ENCODE measurements at regions of chr12 and their contacts with region 1.

Region 1: DNA sequence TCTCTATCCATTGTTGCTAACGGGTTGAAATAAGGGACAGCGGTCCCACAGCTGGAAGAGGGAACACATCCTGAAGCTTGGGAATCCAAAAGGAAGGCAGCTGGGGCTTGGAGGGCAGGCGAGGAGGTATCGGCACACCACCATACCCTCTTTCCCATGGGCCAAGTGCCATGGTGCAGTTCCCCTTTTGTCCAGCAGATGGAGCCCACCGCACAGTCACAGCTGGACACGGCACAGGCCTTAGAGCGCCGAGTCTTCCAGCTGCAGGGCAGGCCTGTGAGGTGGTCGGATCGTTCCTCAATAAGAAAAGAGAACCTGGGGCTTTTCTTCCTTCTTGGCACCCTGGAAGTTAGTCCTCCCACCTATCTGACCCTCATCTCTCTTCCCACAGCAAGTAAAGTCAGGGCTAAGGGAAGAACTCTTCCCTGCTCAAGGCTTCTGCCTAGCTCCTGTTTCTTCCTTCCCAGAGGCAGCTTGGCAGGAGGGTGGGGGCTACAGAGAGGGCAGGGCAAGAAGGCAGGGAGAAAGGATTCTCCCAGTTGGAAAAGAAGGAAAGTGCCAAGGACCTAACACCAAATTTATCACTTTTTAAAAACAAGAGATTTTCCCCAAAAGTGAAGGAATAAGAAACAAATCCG is 8.6 kb downstream of the PPP1R1A start:
- DNase-seq: peak; percentile 86
- ATAC-seq: peak; percentile 93
- H3K4me3 Mint-ChIP-seq: no peak overlapping the region
- H3K27ac Mint-ChIP-seq: no peak overlapping the region
- H3K4me1 Mint-ChIP-seq: no peaks in the 10 kb centered on the region
- H3K27me3 Mint-ChIP-seq: peaks cover 13% of the 10 kb centered on the region

Region 2: GRCh38 chr12:54455760-54456469 is 123.9 kb before region 1 on chr12:
- CTCF ChIA-PET with region 1: no interaction called
- POLR2A ChIA-PET with region 1: no interaction called
- DNase-seq: no peak
- ATAC-seq: no peak
- H3K4me3 Mint-ChIP-seq: no peak overlapping the region
- H3K27ac Mint-ChIP-seq: no peak overlapping the region
- H3K4me1 Mint-ChIP-seq: no peaks in the 10 kb centered on the region
- H3K27me3 Mint-ChIP-seq: peaks cover 30% of the 10 kb centered on the region

Region 3: GRCh38 chr12:54502485-54502884 is 77.3 kb before region 1 on chr12:
- CTCF ChIA-PET with region 1: no interaction called
- POLR2A ChIA-PET with region 1: no interaction called
- DNase-seq: no peak
- ATAC-seq: no peak
- H3K4me3 Mint-ChIP-seq: peak overlapping the region; percentile 42
- H3K27ac Mint-ChIP-seq: peak overlapping the region; percentile 60
- H3K4me1 Mint-ChIP-seq: peaks cover 48% of the 10 kb centered on the region
- H3K27me3 Mint-ChIP-seq: no peaks in the 10 kb centered on the region

Region 4: DNA sequence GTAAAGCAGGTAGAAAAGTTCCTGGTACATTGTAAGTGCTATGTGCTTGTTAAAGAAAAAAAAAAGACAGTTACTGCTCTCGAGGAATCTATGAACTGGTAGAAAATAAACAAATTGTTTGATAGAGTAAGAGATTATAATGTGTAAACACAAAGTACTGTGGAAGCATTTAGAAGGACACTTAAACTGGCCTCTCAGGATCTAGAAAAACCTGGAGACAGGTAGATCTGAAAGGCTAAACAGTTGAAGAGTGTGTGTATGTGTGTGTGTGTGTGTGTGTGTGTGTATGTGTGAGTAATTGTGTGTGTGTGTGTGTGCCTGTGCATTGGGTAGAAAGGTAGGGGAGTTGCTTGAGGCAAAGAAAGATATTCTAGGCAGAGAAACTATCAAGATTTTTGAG is 67.3 kb before region 1 on chr12:
- CTCF ChIA-PET with region 1: no interaction called
- POLR2A ChIA-PET with region 1: no interaction called
- DNase-seq: no peak
- ATAC-seq: no peak
- H3K4me3 Mint-ChIP-seq: no peak overlapping the region
- H3K27ac Mint-ChIP-seq: no peak overlapping the region
- H3K4me1 Mint-ChIP-seq: no peaks in the 10 kb centered on the region
- H3K27me3 Mint-ChIP-seq: no peaks in the 10 kb centered on the region

Region 5: GRCh38 chr12:54535474-54535873 is 44.3 kb before region 1 on chr12:
- CTCF ChIA-PET with region 1: no interaction called
- POLR2A ChIA-PET with region 1: no interaction called
- DNase-seq: no peak
- ATAC-seq: no peak
- H3K4me3 Mint-ChIP-seq: no peak overlapping the region
- H3K27ac Mint-ChIP-seq: no peak overlapping the region
- H3K4me1 Mint-ChIP-seq: no peaks in the 10 kb centered on the region
- H3K27me3 Mint-ChIP-seq: no peaks in the 10 kb centered on the region

Region 6: GRCh38 chr12:54560374-54560858 is 19.4 kb before region 1 on chr12:
- CTCF ChIA-PET with region 1: interaction called, 46 read pairs
- POLR2A ChIA-PET with region 1: interaction called, 3 read pairs
- DNase-seq: peak; percentile 90
- ATAC-seq: peak; percentile 100
- H3K4me3 Mint-ChIP-seq: peak overlapping the region; percentile 67
- H3K27ac Mint-ChIP-seq: peak overlapping the region; percentile 78
- H3K4me1 Mint-ChIP-seq: peaks cover 27% of the 10 kb centered on the region
- H3K27me3 Mint-ChIP-seq: no peaks in the 10 kb centered on the region

Region 7: DNA sequence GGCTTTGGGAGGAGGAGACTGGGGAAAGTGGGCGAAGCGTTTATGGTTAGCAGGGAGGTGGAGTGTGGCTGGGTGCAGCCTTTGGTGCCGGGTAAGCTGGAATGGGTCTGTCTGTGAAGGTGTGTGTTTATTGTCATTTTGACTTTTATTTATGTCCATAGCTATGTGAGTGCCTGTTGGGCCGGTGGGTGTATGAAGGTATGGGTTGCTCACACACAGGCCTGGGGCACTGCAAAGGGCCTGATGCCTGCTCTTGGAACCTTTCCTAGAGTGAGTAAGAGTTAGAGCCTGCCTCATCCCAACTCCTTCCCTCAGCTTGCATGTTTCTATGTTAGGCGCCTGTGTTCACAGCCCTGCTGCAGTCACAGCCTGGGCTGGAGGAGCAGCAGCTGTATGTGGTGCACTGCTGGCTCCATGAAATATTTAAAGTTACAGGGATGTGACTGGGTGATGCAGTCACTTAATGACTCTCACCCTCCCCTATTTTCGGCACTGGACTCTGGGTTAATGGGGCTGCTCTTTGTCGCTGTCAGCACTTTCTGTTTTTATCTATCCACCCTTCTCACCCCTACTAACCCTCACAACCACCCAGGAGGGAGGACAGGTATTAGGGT is 11.3 kb after region 1 on chr12:
- CTCF ChIA-PET with region 1: interaction called, 14 read pairs
- POLR2A ChIA-PET with region 1: interaction called, 3 read pairs
- DNase-seq: no peak
- ATAC-seq: no peak
- H3K4me3 Mint-ChIP-seq: no peak overlapping the region
- H3K27ac Mint-ChIP-seq: no peak overlapping the region
- H3K4me1 Mint-ChIP-seq: peaks cover 2% of the 10 kb centered on the region
- H3K27me3 Mint-ChIP-seq: peaks cover 50% of the 10 kb centered on the region

Region 8: DNA sequence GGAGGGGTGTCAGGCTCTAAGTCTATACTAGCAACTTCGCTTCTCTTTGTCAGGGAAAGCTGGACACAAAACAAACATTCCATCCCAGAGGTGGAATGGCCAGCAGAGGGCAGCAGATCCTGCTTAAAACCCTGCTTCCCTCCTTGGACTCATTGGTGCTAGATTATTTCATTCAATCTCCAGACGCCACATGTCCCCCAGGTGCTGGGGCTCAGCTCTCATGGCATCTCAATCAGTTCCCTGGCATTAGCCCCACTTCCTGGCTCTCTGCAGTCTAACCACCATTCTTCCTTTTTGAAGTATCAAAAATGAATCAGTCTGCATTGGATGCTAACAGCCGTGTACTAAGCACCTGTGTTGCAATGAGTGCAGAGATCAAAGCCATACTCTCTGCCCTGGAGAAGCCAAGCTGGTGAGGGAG is 16.7 kb after region 1 on chr12:
- CTCF ChIA-PET with region 1: interaction called, 14 read pairs
- POLR2A ChIA-PET with region 1: interaction called, 3 read pairs
- DNase-seq: peak; percentile 60
- ATAC-seq: peak; percentile 72
- H3K4me3 Mint-ChIP-seq: no peak overlapping the region
- H3K27ac Mint-ChIP-seq: no peak overlapping the region
- H3K4me1 Mint-ChIP-seq: no peaks in the 10 kb centered on the region
- H3K27me3 Mint-ChIP-seq: peaks cover 10% of the 10 kb centered on the region

Region 9: DNA sequence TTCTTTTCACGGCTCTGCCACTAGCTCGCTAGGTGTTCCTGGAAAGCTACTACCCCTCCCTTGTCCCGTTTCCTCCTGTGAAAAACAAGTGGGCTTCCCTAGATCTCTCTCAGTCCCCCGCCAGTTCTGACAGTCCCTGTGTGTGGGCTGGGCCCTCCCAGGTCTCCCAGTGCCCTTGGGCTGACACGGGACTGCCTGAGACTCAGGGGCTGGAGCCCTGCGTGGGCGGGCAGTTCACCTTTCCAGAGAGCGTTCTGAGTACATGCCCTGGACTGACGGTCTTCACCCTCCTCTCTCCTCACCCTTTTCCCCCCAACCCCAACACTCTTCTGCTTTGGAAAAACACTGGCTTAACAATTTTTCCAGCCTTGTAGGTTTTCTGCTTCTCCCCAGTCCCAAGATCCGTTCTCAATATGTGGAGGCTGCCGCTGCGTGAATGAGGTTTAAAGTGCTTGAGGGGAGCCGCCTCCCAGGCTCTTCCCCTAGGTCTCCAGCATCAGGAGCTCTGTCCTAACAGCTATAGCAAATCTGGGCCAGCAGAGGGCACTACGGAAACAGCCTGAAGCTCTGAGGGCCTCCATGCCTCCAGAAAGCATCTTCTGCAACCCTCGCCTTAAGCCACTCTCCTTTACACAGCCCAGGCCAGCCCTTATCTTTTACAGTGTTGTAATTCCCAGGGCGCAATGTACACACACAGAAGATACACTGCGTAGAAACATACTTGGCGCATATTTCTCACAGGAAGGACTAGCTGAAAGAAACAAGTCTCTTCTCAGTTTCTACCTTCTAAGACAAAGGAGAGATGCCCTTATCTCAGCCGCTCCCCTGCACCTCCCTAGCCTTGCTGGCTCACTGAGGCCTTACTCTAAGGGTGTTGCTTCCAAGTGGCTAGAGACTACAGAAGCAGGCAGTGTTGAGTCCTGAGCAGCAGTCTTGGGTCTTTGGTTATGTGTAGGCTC is 78.8 kb after region 1 on chr12:
- CTCF ChIA-PET with region 1: interaction called, 10 read pairs
- POLR2A ChIA-PET with region 1: no interaction called
- DNase-seq: peak; percentile 63
- ATAC-seq: peak; percentile 81
- H3K4me3 Mint-ChIP-seq: no peak overlapping the region
- H3K27ac Mint-ChIP-seq: no peak overlapping the region
- H3K4me1 Mint-ChIP-seq: no peaks in the 10 kb centered on the region
- H3K27me3 Mint-ChIP-seq: peaks cover 12% of the 10 kb centered on the region